ENCODE measurements at regions of chr18 and their contacts with region 1.

Region 1: GRCh38 chr18:20988726-20989125 is 122.9 kb downstream of the ROCK1 start:
- DNase-seq: no peak

Region 2: DNA sequence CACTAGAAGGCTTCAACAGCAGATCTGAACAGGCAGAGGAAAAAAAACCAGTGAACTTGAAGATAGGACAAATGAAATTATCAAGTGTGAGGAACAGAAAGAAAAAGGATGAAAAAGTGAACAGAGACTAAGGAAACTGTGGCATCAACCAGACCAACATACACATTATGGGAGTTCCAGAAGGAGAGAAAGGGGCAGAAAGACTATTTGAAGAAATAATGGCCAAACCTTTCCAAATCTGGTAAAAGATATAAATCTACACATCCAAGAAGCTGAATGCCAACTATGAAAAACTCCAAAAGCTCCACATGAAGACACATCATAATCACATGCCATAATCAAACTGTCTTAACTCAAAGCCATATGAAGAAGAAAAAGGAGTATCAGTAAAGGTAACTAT is 43.1 kb after region 1 on chr18:
- intact Hi-C with region 1: loop called (anchors 5 kb)
- DNase-seq: no peak

Region 3: GRCh38 chr18:21049306-21049705 is 60.6 kb after region 1 on chr18:
- intact Hi-C with region 1: loop called (anchors 5 kb)
- DNase-seq: no peak

Measured in posterior cingulate gyrus (tissue), 11 donors.